ENCODE measurements at regions of chr6 and their contacts with region 1.

Region 1: DNA sequence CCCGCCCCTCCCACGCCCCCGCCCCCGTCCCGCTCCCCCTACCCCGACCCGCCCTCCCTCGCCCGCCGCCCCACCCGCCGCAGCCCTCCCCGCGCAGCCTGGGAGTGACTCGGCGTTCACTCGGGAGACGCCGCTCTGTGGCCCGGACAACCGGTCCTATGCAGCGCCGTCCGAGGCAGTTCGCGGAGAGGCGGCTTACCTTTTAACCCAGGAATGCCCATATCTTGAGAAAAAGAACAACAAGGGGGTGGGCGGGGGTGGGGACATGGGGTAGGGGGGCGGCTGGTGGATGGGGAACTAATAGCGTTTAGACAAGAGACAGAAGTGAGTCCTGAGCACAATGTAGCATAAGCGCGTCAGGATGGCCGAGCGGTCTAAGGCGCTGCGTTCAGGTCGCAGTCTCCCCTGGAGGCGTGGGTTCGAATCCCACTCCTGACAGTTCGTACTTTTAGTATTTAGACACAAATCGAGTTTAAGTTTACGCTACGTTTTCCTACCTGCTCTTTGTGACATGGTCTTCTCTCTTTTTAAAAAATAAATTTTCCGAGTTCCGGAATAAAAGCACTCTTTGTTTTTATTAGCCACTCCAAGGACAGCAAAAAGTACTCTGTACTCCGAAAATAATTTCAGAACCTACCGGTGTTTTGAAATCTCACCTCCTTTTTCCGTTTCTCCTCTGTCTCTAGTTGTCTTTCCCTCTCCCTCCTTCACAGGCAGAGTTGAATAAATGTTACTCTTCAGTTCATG is 17.1 kb upstream of the HMGN4 start:
- DNase-seq: peak; percentile 83
- ATAC-seq: peak; percentile 62
- H3K4me3 Mint-ChIP-seq: peak overlapping the region; percentile 90
- H3K27ac Mint-ChIP-seq: peak overlapping the region; percentile 75
- H3K4me1 Mint-ChIP-seq: peaks cover 26% of the 10 kb centered on the region
- H3K27me3 Mint-ChIP-seq: no peaks in the 10 kb centered on the region
- CTCF ChIP-seq: no peak

Region 2: GRCh38 chr6:26322645-26323482 is 198.2 kb before region 1 on chr6:
- CTCF ChIA-PET with region 1: no interaction called
- POLR2A ChIA-PET with region 1: no interaction called
- DNase-seq: peak; percentile 52
- ATAC-seq: peak; percentile 66
- H3K4me3 Mint-ChIP-seq: peak overlapping the region; percentile 87
- H3K27ac Mint-ChIP-seq: peak overlapping the region; percentile 51
- H3K4me1 Mint-ChIP-seq: peaks cover 28% of the 10 kb centered on the region
- H3K27me3 Mint-ChIP-seq: no peaks in the 10 kb centered on the region; the same call in 1 of the 2 replicates
- CTCF ChIP-seq: no peak

Region 3: DNA sequence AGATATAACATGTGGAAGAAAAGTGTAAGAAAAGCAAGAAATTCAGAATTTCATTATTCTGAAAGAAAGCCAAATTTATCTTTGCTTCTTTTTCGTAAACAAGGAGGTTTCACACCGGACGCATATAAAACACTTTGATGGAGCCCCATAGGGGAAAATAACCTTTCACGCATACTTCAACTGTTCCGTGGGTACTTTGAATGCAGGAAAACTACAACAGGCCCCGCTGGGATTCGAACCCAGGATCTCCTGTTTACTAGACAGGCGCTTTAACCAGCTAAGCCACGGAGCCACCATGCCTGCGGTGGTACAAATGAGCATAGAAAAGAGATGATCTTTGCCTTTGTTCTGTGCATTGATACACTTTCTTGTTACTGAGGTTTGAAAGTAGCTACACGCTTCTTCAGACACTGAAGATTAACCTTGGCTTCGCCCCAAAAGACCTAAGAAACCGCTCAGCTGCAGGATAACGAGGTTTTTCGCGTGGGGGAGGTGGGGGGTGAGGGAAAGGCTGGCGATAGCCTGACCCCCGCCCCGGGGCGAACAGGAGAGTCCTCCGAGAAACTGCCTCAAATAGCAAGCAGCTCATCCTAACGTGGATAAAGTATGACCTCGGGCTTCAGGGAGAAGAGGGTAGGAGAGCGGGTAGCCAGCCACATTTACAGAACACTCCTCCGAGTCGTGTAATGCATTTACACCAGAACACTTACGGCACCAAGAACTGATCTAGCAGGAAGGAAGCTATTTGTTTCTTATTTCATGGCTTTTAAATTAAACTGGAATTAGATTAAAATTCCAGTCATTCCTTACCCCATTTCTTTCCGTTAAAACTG is 11.9 kb after region 1 on chr6:
- CTCF ChIA-PET with region 1: interaction called, 13 read pairs
- POLR2A ChIA-PET with region 1: interaction called, 5 read pairs
- DNase-seq: peak; percentile 89
- ATAC-seq: peak; percentile 25
- H3K4me3 Mint-ChIP-seq: peak overlapping the region; percentile 98
- H3K27ac Mint-ChIP-seq: peak overlapping the region; percentile 92
- H3K4me1 Mint-ChIP-seq: peaks cover 42% of the 10 kb centered on the region
- H3K27me3 Mint-ChIP-seq: no peaks in the 10 kb centered on the region
- CTCF ChIP-seq: no peak

Measured in WTC11 (cell line).